ENCODE measurements at regions of chr15 and their contacts with region 1.

Region 1: GRCh38 chr15:43204016-43204901 is 16.6 kb downstream of the EPB42 start:
- DNase-seq: no peak
- H3K4me3 ChIP-seq: no peak overlapping the region
- H3K27me3 ChIP-seq: peaks cover 27% of the 10 kb centered on the region
- CTCF ChIP-seq: peak; percentile 77

Region 2: GRCh38 chr15:43185157-43186017 is 18.9 kb before region 1 on chr15 and contains the start of gene CCNDBP1:
- CTCF ChIA-PET with region 1: interaction called, 61 read pairs
- POLR2A ChIA-PET with region 1: no interaction called
- DNase-seq: peak; percentile 51
- H3K4me3 ChIP-seq: peak within 1 kb of the TSS; percentile 82
- H3K27me3 ChIP-seq: no peaks in the 10 kb centered on the region
- CTCF ChIP-seq: peak; percentile 64
- polyA plus RNA-seq, gene CCNDBP1: 76.5 and 86.5 TPM in 2 replicates

Region 3: GRCh38 chr15:43218908-43219706 is 14.8 kb after region 1 on chr15:
- CTCF ChIA-PET with region 1: interaction called, 24 read pairs
- POLR2A ChIA-PET with region 1: no interaction called
- DNase-seq: no peak
- H3K4me3 ChIP-seq: no peak overlapping the region
- H3K27me3 ChIP-seq: peaks cover 8% of the 10 kb centered on the region
- CTCF ChIP-seq: peak; percentile 34

Region 4: DNA sequence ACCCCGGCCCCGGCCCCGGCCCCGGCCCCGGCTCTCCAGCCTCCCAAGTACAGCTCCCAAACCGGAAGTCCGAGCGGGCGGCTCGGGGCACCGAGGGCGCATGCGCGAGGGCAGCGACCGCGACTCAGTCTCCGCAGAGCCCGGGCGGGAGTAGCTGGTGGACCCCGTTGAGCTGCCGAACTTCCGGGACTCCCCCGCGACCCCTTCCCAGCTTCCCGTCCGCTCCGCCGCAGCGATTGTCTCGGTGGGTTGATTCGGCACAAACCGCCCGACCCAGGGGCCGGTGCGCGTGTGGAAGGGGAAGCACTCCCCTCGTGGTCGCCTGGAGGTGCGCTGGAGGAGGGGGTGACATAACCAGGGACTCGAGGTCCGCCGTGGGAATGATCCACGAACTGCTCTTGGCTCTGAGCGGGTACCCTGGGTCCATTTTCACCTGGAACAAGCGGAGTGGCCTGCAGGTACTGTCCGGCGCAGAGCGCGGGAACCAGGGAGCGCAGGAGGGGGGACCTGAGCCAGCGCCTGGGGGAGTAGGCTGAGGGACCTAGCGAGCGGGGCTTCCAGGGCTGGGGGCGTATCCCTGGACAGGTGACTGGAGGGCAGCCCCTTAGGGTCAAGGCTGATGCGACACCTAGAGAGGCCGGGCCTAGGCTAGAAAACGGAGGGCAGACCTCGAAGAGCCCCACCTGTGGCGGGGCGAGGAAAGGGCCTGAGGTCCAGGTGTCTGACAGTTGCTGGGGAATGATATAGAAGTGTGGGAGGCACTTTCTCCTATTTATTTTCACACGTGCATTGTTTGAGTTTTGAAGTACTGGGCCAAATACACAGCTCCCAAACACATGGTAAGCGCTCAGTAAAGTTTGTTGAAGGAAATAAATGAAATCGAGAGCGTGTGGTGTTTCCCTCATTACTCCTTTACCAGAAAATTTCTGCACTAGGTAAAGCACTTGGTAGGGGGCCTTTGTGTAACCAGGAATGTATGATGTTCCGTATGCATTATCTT is 167.0 kb after region 1 on chr15 and contains the starts of genes TUBGCP4 and ZSCAN29:
- CTCF ChIA-PET with region 1: no interaction called
- POLR2A ChIA-PET with region 1: no interaction called
- DNase-seq: no peak
- H3K4me3 ChIP-seq: peak within 1 kb of the TSS; percentile 72
- H3K27me3 ChIP-seq: no peaks in the 10 kb centered on the region
- CTCF ChIP-seq: peak; percentile 44
- polyA plus RNA-seq, gene TUBGCP4: 10.2 and 10.3 TPM in 2 replicates
- polyA plus RNA-seq, gene ZSCAN29: 6.4 TPM in 2 replicates